Tibial artery (tissue), 4 donors: ENCODE measurements at regions of chr5 and their contacts with region 1.

Region 1: GRCh38 chr5:102865510-102866236 is 110.6 kb downstream of the PAM start:
- DNase-seq: peak; percentile 80 to 90
- H3K4me3 ChIP-seq: peak overlapping the region; percentile 61 to 71
- H3K27ac ChIP-seq: peak overlapping the region; percentile 86 to 92
- H3K4me1 ChIP-seq: peaks cover 0 to 55% (median 13%) of the 10 kb centered on the region in 4 donors
- H3K27me3 ChIP-seq: no peaks in the 10 kb centered on the region
- CTCF ChIP-seq: no peak

Region 2: DNA sequence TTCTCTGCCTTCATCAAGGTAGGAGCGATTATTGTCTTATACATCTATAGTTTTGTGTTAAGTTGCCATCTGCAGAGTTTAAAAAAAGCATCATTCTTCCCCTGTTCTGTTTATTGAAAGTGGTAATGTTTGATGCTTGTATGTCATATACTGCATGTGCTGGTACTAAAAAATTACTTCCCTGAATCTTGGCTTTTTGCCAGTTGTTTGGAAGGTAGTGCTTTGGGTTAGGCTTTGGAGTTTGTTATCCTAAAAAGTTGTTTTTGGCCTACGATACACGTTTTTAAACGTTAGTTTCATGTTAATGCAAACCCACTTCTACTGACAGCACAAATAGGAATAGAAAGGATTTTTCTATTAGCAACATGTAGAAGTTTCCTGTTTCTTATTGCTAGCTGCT is 96.0 kb after region 1 on chr5:
- intact Hi-C with region 1: loop called (anchors 10 kb)
- DNase-seq: no peak
- H3K4me3 ChIP-seq: no peak overlapping the region
- H3K27ac ChIP-seq: no peak overlapping the region
- H3K4me1 ChIP-seq: peaks cover 0 to 55% (median 10%) of the 10 kb centered on the region in 4 donors
- H3K27me3 ChIP-seq: no peaks in the 10 kb centered on the region
- CTCF ChIP-seq: no peak